Endothelial cell of umbilical vein (primary cell): ENCODE measurements at regions of chr17 and their contacts with region 1.

Region 1: GRCh38 chr17:49997791-49998703 is 3.0 kb upstream of the DLX3 start:
- DNase-seq: peak; percentile 74
- H3K4me3 ChIP-seq: no peak overlapping the region
- H3K27ac ChIP-seq: no peak overlapping the region
- H3K4me1 ChIP-seq: no peaks in the 10 kb centered on the region
- H3K27me3 ChIP-seq: peaks cover 41 to 53% of the 10 kb centered on the region in 2 experiments
- CTCF ChIP-seq: peak; percentile 83 to 87
- POLR2A ChIP-seq: no peak

Region 2: GRCh38 chr17:49556223-49556971 is 441.6 kb before region 1 on chr17:
- CTCF ChIA-PET with region 1: interaction called, 67 read pairs
- POLR2A ChIA-PET with region 1: no interaction called
- dilution Hi-C with region 1: no loop called
- intact Hi-C with region 1: no loop called
- DNase-seq: peak; percentile 66
- H3K4me3 ChIP-seq: no peak overlapping the region
- H3K27ac ChIP-seq: no peak overlapping the region
- H3K4me1 ChIP-seq: peaks cover 2% of the 10 kb centered on the region
- H3K27me3 ChIP-seq: no peaks in the 10 kb centered on the region
- CTCF ChIP-seq: peak; percentile 98 to 99
- POLR2A ChIP-seq: no peak

Region 3: DNA sequence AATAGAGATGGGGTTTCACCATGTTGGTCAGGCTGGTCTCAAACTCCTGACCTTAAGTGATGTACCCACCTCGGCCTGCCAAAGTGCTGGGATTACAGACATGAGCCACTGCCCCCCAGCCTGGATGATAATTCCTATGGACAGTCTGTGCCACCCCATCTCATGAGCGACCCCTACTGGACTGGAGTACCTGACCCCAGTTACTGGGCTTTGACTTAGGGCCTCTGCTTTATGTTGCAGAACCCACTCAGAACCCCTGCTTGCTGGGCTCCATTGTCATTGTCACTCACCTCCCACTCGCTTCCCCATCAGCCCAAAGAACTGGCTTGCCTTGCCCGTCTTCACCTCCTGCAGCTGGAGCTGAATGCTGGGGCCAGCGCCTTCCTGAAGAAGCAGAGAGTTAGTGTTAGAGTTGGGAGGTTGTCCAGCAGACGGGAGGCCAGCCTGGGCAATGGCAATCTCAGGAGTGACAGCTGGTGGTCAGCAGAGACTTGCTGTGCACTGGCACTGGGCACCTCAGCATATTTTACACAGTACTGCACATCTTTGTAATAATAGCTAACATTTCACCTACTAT is 154.2 kb before region 1 on chr17:
- CTCF ChIA-PET with region 1: interaction called, 11 read pairs
- POLR2A ChIA-PET with region 1: no interaction called
- dilution Hi-C with region 1: no loop called
- intact Hi-C with region 1: no loop called
- DNase-seq: peak; percentile 39
- H3K4me3 ChIP-seq: no peak overlapping the region
- H3K27ac ChIP-seq: no peak overlapping the region
- H3K4me1 ChIP-seq: peaks cover 8% of the 10 kb centered on the region
- H3K27me3 ChIP-seq: no peaks in the 10 kb centered on the region
- CTCF ChIP-seq: peak; percentile 66 to 69
- POLR2A ChIP-seq: no peak

Region 4: GRCh38 chr17:49880291-49881053 is 117.6 kb before region 1 on chr17:
- CTCF ChIA-PET with region 1: interaction called, 590 read pairs
- POLR2A ChIA-PET with region 1: interaction called, 12 read pairs
- dilution Hi-C with region 1: no loop called
- intact Hi-C with region 1: loop called (anchors 1 kb)
- DNase-seq: peak; percentile 54
- H3K4me3 ChIP-seq: no peak overlapping the region
- H3K27ac ChIP-seq: no peak overlapping the region
- H3K4me1 ChIP-seq: no peaks in the 10 kb centered on the region
- H3K27me3 ChIP-seq: peaks cover 19 to 23% of the 10 kb centered on the region in 2 experiments
- CTCF ChIP-seq: peak; percentile 83 to 98
- POLR2A ChIP-seq: no peak

Region 5: GRCh38 chr17:49952209-49952911 is 45.7 kb before region 1 on chr17:
- CTCF ChIA-PET with region 1: interaction called, 91 read pairs
- POLR2A ChIA-PET with region 1: no interaction called
- dilution Hi-C with region 1: no loop called
- intact Hi-C with region 1: loop called (anchors 1 kb)
- DNase-seq: peak; percentile 69
- H3K4me3 ChIP-seq: no peak overlapping the region
- H3K27ac ChIP-seq: no peak overlapping the region
- H3K4me1 ChIP-seq: peaks cover 19% of the 10 kb centered on the region
- H3K27me3 ChIP-seq: peaks cover 1 to 8% of the 10 kb centered on the region in 2 experiments
- CTCF ChIP-seq: peak; percentile 90 to 93
- POLR2A ChIP-seq: no peak

Region 6: GRCh38 chr17:50015146-50015545 is 17.1 kb after region 1 on chr17:
- CTCF ChIA-PET with region 1: interaction called, 10 read pairs
- POLR2A ChIA-PET with region 1: no interaction called
- dilution Hi-C with region 1: no loop called
- intact Hi-C with region 1: no loop called
- DNase-seq: no peak
- H3K4me3 ChIP-seq: no peak overlapping the region
- H3K27ac ChIP-seq: no peak overlapping the region
- H3K4me1 ChIP-seq: no peaks in the 10 kb centered on the region
- H3K27me3 ChIP-seq: peaks cover 8 to 19% of the 10 kb centered on the region in 2 experiments
- CTCF ChIP-seq: no peak
- POLR2A ChIP-seq: no peak

Region 7: GRCh38 chr17:50047488-50048126 is 49.6 kb after region 1 on chr17:
- CTCF ChIA-PET with region 1: no interaction called
- POLR2A ChIA-PET with region 1: no interaction called
- dilution Hi-C with region 1: no loop called
- intact Hi-C with region 1: no loop called
- DNase-seq: peak; percentile 82
- H3K4me3 ChIP-seq: peak overlapping the region in 1 of 3 experiments; percentile 3
- H3K27ac ChIP-seq: peak overlapping the region; percentile 91
- H3K4me1 ChIP-seq: peaks cover 62% of the 10 kb centered on the region
- H3K27me3 ChIP-seq: no peaks in the 10 kb centered on the region
- CTCF ChIP-seq: no peak
- POLR2A ChIP-seq: peak; percentile 28